ENCODE measurements at regions of chr4 and their contacts with region 1.

Region 1: DNA sequence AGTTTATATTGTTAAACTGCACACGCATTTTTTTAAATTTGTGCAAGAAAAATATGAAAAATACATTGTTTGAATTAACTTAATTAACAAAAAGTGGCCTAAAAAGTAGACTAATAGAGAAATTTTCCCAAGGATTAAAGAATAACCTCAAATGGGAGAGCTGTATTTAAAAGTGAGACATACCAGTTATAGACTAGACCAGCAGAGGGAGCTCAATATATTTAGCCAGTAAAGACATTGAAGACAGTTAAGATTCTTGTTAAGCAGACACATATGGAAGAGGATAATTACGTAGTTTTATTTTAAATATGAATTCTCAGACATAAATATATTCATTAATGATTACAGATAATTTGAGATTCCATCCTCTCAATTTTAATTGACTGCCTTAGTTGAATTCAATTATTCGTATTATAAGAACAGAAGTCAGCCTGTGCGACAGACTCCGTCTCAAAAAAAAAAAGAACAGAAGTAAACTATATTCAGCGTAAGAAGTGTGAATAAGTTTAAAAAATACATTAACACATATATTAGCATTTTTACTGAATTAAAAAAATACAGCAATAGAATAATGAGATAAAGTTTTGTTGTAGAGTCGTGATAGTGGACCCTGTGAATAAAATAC is 64.8 kb downstream of the GLRA3 start:
- DNase-seq: no peak
- H3K4me3 Mint-ChIP-seq: no peak overlapping the region
- H3K27ac Mint-ChIP-seq: no peak overlapping the region
- H3K4me1 Mint-ChIP-seq: no peaks in the 10 kb centered on the region
- H3K27me3 Mint-ChIP-seq: no peaks in the 10 kb centered on the region

Region 2: DNA sequence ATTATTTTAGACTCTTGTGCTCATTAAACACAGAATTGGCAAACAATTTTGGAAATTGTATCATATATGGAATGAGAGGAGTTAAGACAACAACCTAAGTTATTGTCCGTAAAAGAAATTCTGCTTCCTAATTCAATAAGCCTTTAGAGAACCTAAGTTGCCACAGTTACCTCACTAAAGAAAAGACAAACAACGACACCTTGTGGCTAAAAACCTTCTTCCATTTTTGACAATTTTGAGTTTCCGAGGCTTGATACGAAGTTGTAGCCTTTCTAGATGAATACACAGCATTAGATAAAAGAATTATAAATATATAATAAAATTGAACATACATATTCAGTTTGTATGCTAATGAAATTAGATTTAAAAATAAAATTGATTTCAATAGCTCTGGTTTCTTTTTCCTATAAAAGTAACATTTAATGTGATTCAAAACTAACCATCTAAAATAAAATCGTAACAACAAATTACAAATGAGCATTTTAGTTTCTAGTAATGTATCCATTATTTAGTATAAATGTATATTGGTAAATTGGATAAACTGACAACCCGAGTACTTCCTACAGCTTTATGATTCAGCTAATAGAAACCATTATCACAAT is 772.7 kb after region 1 on chr4:
- CTCF ChIA-PET with region 1: interaction called, 4 read pairs
- intact Hi-C with region 1: loop called (anchors 2 kb)
- DNase-seq: no peak
- H3K4me3 Mint-ChIP-seq: no peak overlapping the region
- H3K27ac Mint-ChIP-seq: no peak overlapping the region
- H3K4me1 Mint-ChIP-seq: no peaks in the 10 kb centered on the region
- H3K27me3 Mint-ChIP-seq: no peaks in the 10 kb centered on the region

Region 3: DNA sequence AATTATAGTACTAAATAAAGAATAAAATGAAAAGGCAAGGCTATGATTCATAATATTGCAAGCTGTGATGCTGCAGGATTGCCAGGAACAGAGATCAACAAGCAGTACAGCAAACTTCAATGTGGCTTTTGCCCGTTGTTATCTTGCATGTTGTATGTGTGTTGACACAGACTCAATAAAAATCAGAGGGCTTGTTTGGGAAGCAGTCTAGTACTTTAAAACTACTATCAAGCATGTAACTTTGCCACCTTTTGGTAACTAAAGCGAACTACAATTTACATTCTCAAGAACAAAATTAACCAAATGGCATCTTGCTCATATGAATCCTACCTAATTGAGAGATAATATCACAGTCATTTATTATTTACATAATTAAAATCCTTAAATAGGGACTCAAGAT is 1127.6 kb after region 1 on chr4:
- CTCF ChIA-PET with region 1: no interaction called
- intact Hi-C with region 1: loop called (anchors 5 kb)
- DNase-seq: no peak
- H3K4me3 Mint-ChIP-seq: no peak overlapping the region
- H3K27ac Mint-ChIP-seq: no peak overlapping the region
- H3K4me1 Mint-ChIP-seq: no peaks in the 10 kb centered on the region
- H3K27me3 Mint-ChIP-seq: peaks cover 2% of the 10 kb centered on the region

Measured in activated naive CD4-positive, alpha-beta T cell treated with anti-CD3 and anti-CD28 coated beads for 36 hours (primary cell).